CD8-positive, alpha-beta T cell (primary cell): ENCODE measurements at regions of chr4 and their contacts with region 1.

Region 1: GRCh38 chr4:139083956-139084803 is 68.6 kb downstream of the NOCT start:
- DNase-seq: peak; percentile 54 to 92 (median 80)
- ATAC-seq: peak; percentile 41
- H3K4me3 ChIP-seq: peak overlapping the region; percentile 80 to 98
- H3K4me3 Mint-ChIP-seq: peak overlapping the region; percentile 87
- H3K27ac ChIP-seq: peak overlapping the region; percentile 93 to 96
- H3K27ac Mint-ChIP-seq: peak overlapping the region; percentile 94
- H3K4me1 ChIP-seq: peaks cover 25% of the 10 kb centered on the region
- H3K4me1 Mint-ChIP-seq: peaks cover 38% of the 10 kb centered on the region
- H3K27me3 ChIP-seq: no peaks in the 10 kb centered on the region
- H3K27me3 Mint-ChIP-seq: no peaks in the 10 kb centered on the region
- CTCF ChIP-seq: peak; percentile 18

Region 2: GRCh38 chr4:139050446-139050845 is 33.7 kb before region 1 on chr4:
- CTCF ChIA-PET with region 1: no interaction called
- POLR2A ChIA-PET with region 1: interaction called, 4 read pairs
- intact Hi-C with region 1: loop called in 1 of 2 experiments (anchors 5 kb)
- DNase-seq: no peak
- ATAC-seq: no peak
- H3K4me3 ChIP-seq: no peak overlapping the region
- H3K4me3 Mint-ChIP-seq: no peak overlapping the region
- H3K27ac ChIP-seq: no peak overlapping the region
- H3K27ac Mint-ChIP-seq: peak overlapping the region; percentile 14
- H3K4me1 ChIP-seq: no peaks in the 10 kb centered on the region
- H3K4me1 Mint-ChIP-seq: peaks cover 15% of the 10 kb centered on the region
- H3K27me3 ChIP-seq: no peaks in the 10 kb centered on the region
- H3K27me3 Mint-ChIP-seq: no peaks in the 10 kb centered on the region
- CTCF ChIP-seq: no peak

Region 3: GRCh38 chr4:139295206-139295941 is 211.2 kb after region 1 on chr4:
- CTCF ChIA-PET with region 1: interaction called, 5 read pairs
- POLR2A ChIA-PET with region 1: interaction called, 34 read pairs
- intact Hi-C with region 1: loop called (anchors 1 to 2 kb)
- DNase-seq: peak; percentile 94 to 100 (median 99)
- ATAC-seq: peak; percentile 91
- H3K4me3 ChIP-seq: peak overlapping the region; percentile 65 to 91
- H3K4me3 Mint-ChIP-seq: peak overlapping the region; percentile 91
- H3K27ac ChIP-seq: peak overlapping the region; percentile 74 to 87
- H3K27ac Mint-ChIP-seq: peak overlapping the region; percentile 95
- H3K4me1 ChIP-seq: peaks cover 31% of the 10 kb centered on the region
- H3K4me1 Mint-ChIP-seq: peaks cover 37% of the 10 kb centered on the region
- H3K27me3 ChIP-seq: no peaks in the 10 kb centered on the region
- H3K27me3 Mint-ChIP-seq: no peaks in the 10 kb centered on the region
- CTCF ChIP-seq: peak; percentile 77

Region 4: GRCh38 chr4:139554893-139555704 is 470.9 kb after region 1 on chr4:
- CTCF ChIA-PET with region 1: no interaction called
- POLR2A ChIA-PET with region 1: no interaction called
- intact Hi-C with region 1: loop called (anchors 10 kb)
- DNase-seq: peak; percentile 43 to 89 (median 74)
- ATAC-seq: peak; percentile 75
- H3K4me3 ChIP-seq: peak overlapping the region; percentile 79 to 84
- H3K4me3 Mint-ChIP-seq: peak overlapping the region; percentile 94
- H3K27ac ChIP-seq: peak overlapping the region in 1 of 2 experiments; percentile 53
- H3K27ac Mint-ChIP-seq: peak overlapping the region; percentile 95
- H3K4me1 ChIP-seq: peaks cover 9% of the 10 kb centered on the region
- H3K4me1 Mint-ChIP-seq: peaks cover 31% of the 10 kb centered on the region
- H3K27me3 ChIP-seq: peaks cover 0 to 9% of the 10 kb centered on the region in 2 experiments
- H3K27me3 Mint-ChIP-seq: peaks cover 9% of the 10 kb centered on the region
- CTCF ChIP-seq: no peak